ENCODE measurements at regions of chr11 and their contacts with region 1.

Region 1: GRCh38 chr11:37946155-37946766 is 1348.2 kb upstream of the RAG2 start:
- DNase-seq: no peak
- ATAC-seq: peak in 1 of 8 donors; percentile 12
- H3K4me3 ChIP-seq: no peak overlapping the region
- H3K27ac ChIP-seq: no peak overlapping the region
- H3K4me1 ChIP-seq: no peaks in the 10 kb centered on the region
- H3K27me3 ChIP-seq: no peaks in the 10 kb centered on the region
- CTCF ChIP-seq: peak; percentile 18 to 64 (median 56)

Region 2: GRCh38 chr11:37409124-37409523 is 537.1 kb before region 1 on chr11:
- intact Hi-C with region 1: no loop called
- DNase-seq: no peak
- ATAC-seq: no peak
- H3K4me3 ChIP-seq: no peak overlapping the region
- H3K27ac ChIP-seq: no peak overlapping the region
- H3K4me1 ChIP-seq: no peaks in the 10 kb centered on the region
- H3K27me3 ChIP-seq: no peaks in the 10 kb centered on the region
- CTCF ChIP-seq: no peak

Region 3: DNA sequence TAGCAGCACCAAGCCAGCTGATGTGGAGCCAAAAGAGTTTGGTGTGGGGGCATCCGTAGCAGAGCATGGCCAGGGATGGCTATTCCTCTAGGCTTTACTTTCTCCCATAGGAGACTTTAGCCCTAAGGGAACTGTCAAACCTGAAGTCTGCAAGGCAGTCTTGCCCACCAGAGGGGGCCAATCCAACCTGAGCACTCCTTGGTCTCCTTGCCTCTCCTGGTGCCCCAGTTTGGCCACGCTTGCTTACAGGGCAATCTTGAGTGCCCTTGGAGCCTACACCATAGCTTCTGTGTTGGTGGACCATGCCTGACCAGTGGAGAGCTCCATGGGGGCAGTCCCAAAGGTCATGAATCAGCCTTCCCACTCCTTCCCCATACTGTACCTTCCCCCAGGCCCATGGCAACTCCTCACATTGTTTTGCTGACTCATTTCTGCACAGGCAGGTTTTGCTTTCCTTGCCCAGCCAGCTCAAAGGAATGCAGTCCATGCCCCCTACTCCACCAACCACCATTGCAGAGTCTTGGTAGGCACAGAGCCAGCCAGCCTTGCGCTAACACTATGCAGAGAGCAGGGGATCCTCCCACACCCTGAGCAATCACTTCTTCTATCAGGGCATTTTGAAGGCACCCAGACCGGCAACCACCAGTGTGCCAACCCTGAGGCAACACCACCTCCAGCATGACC is 73.0 kb after region 1 on chr11:
- intact Hi-C with region 1: loop called in 1 of 10 experiments (anchors 10 kb)
- DNase-seq: no peak
- ATAC-seq: no peak
- H3K4me3 ChIP-seq: no peak overlapping the region
- H3K27ac ChIP-seq: no peak overlapping the region
- H3K4me1 ChIP-seq: no peaks in the 10 kb centered on the region
- H3K27me3 ChIP-seq: no peaks in the 10 kb centered on the region
- CTCF ChIP-seq: no peak

Region 4: GRCh38 chr11:38791302-38791961 is 845.2 kb after region 1 on chr11:
- intact Hi-C with region 1: loop called in 5 of 10 experiments (anchors 5 to 10 kb)
- DNase-seq: peak in 1 of 2 donors; percentile 40
- ATAC-seq: peak in 2 of 8 donors; percentile 41 to 60
- H3K4me3 ChIP-seq: no peak overlapping the region
- H3K27ac ChIP-seq: no peak overlapping the region
- H3K4me1 ChIP-seq: no peaks in the 10 kb centered on the region
- H3K27me3 ChIP-seq: no peaks in the 10 kb centered on the region
- CTCF ChIP-seq: peak; percentile 41 to 83 (median 72)